RWPE1 (cell line): ENCODE measurements at regions of chr2 and their contacts with region 1.

Region 1: DNA sequence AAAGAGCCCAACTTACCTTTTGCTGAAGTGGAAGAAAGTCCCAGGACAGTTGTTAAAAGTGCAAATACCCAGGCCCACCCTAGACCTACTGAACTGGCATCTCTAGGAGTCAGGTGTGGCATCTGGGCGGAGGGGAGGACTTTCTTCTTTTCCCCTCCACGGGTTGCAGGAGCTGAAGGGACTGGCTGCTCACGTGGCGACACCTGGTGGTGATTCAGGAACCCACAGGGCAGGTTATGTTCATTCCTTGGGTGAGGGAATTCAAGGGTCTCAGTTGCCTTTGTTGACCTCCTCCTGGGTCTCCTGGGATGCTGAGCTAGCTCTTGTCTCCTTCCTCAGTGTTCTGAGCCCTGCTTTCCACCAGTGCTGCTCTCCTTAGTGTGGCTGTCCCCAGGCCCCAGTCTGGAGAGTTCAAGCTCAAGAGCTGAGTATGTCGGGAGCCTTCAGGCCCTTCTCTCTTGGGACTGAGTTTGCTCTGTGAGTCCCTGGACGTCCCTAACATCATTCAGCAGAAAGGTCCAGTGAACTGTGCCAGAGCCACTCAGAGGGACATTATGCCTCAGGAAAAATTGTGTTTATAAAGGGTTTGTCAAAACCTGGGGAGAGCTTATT is 56.9 kb downstream of the DYSF start:
- DNase-seq: peak; percentile 83
- H3K27ac ChIP-seq: no peak overlapping the region
- CTCF ChIP-seq: peak; percentile 90

Region 2: DNA sequence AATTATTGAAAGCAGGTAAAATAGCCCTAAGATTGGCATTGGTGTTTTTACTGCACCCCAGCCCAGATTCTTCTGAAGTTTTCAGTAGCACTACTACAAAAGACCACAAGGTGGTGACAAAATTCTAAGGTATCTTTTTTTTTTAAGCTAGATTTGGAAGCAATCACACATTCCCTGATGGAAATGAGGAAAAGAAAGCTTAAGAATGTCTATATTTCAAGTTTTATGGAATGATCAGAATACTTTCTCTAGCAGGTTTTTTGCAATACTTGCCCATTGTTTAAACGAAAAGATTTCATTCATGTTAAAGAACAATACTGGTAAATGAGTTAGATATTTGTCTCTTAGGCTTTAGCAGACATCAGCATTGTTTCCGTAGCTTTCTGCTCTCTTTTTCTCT is 210.8 kb before region 1 on chr2:
- CTCF ChIA-PET with region 1: interaction called, 35 read pairs
- POLR2A ChIA-PET with region 1: no interaction called
- DNase-seq: peak; percentile 31
- H3K27ac ChIP-seq: no peak overlapping the region
- CTCF ChIP-seq: peak; percentile 74

Region 3: DNA sequence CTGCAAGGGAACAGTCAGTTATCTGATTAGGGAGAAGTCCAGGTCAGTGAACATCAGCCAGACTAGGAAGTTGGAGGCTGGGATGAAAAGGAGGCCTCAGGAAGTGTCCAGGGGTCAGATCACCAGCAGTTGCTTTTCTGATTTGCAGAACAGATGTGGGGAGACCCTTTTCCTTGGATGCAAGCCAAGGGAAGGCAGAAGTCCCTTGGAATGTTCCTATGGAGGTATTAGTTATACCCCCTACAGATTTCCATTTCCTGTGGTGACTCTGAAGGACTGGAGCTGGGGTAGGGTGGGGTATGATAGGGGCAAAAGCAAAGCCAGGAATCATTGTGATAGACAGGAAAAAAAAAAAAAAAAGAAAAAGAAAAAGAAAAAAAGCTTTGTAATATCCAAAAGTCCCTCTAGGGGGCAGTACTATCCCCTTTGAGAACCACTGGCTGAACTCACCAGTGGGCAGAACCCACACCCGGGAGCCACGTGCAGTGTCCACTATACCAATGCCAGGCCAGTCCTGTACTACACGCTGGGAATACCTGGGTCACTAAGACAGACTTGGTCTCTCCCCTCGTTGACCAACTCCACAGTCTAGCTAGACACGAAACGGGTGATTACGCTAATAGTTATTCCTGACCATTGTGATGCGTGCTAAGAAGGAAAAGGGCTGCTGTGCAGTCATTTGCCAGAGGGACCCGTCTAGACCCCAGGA is 49.6 kb before region 1 on chr2:
- CTCF ChIA-PET with region 1: interaction called, 46 read pairs
- POLR2A ChIA-PET with region 1: no interaction called
- DNase-seq: no peak
- H3K27ac ChIP-seq: no peak overlapping the region
- CTCF ChIP-seq: peak; percentile 52

Region 4: GRCh38 chr2:72956936-72957335 is 1446.6 kb after region 1 on chr2:
- CTCF ChIA-PET with region 1: no interaction called
- POLR2A ChIA-PET with region 1: interaction called, 11 read pairs
- DNase-seq: no peak
- H3K27ac ChIP-seq: no peak overlapping the region
- CTCF ChIP-seq: no peak